ENCODE measurements at regions of chr11 and their contacts with region 1.

Region 1: GRCh38 chr11:39363596-39363995 is 2095.9 kb downstream of the LRRC4C start:
- DNase-seq: no peak
- H3K4me3 ChIP-seq: no peak overlapping the region
- H3K4me3 Mint-ChIP-seq: no peak overlapping the region
- H3K27ac ChIP-seq: no peak overlapping the region
- H3K27ac Mint-ChIP-seq: no peak overlapping the region
- H3K4me1 ChIP-seq: peaks cover 21% of the 10 kb centered on the region
- H3K4me1 Mint-ChIP-seq: peaks cover 25 to 36% (median 33%) of the 10 kb centered on the region in 4 donors
- H3K27me3 ChIP-seq: no peaks in the 10 kb centered on the region
- H3K27me3 Mint-ChIP-seq: no peaks in the 10 kb centered on the region

Region 2: DNA sequence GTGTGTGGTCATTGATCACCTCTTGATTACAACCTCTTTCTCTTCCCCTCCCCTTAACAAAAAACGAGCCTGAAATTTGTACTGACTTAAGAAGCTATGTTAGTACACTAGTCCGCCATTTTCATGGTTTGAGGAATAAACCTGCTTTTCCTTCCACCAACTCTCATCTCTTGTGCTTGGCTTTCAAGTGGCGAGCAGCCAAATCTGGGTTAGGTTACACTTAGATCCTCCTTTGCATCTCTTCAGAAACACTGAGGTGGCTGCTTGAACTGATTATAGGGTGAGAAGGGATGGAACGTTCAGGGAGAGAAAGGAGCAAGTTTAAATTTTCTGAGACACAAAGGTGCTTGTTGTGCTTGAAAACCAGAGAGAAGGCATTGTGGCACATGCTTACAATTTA is 75.6 kb before region 1 on chr11:
- CTCF ChIA-PET with region 1: no interaction called
- POLR2A ChIA-PET with region 1: no interaction called
- intact Hi-C with region 1: no loop called
- DNase-seq: no peak
- H3K4me3 ChIP-seq: no peak overlapping the region
- H3K4me3 Mint-ChIP-seq: no peak overlapping the region
- H3K27ac ChIP-seq: no peak overlapping the region
- H3K27ac Mint-ChIP-seq: no peak overlapping the region
- H3K4me1 ChIP-seq: no peaks in the 10 kb centered on the region
- H3K4me1 Mint-ChIP-seq: no peaks in the 10 kb centered on the region
- H3K27me3 ChIP-seq: no peaks in the 10 kb centered on the region
- H3K27me3 Mint-ChIP-seq: no peaks in the 10 kb centered on the region

Region 3: DNA sequence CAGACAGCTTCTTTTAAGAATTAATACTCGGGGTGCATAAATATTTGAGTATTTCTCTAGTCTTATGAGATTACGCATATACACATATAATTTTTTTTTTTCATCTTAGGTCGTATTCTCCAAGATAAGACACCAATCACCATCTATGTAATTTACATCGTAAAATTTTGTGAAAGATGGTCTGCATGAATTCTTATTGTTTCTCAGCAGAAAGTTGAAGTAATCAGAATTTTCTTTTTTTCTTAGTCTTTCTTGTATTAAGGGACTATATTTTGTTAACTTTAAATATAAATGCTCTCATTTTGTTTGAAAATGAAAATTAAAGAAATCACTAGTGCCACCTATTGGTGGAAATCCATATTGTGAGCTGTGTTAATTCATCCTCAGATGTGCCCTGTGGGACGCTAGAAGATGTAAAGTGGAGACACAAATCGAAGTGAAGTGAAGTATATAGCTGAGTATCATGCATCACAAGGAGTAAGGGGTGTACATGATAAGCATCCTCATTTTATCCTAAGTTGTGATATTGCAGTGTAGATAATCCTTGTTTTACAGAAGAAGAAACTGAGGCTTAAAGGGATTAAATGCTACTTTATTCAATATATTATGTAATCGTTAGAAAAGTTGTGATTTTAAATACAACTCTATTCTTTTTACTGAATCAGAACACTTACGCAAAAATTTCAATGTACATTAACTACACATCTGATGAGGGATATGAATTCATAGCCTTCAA is 11.5 kb after region 1 on chr11:
- CTCF ChIA-PET with region 1: interaction called, 10 read pairs
- POLR2A ChIA-PET with region 1: no interaction called
- intact Hi-C with region 1: no loop called
- DNase-seq: peak in 4 of 5 donors; percentile 38 to 47 (median 42)
- H3K4me3 ChIP-seq: no peak overlapping the region
- H3K4me3 Mint-ChIP-seq: no peak overlapping the region
- H3K27ac ChIP-seq: no peak overlapping the region
- H3K27ac Mint-ChIP-seq: peak overlapping the region in 1 of 7 donors; percentile 1
- H3K4me1 ChIP-seq: peaks cover 6% of the 10 kb centered on the region
- H3K4me1 Mint-ChIP-seq: peaks cover 17 to 32% (median 21%) of the 10 kb centered on the region in 4 donors
- H3K27me3 ChIP-seq: no peaks in the 10 kb centered on the region
- H3K27me3 Mint-ChIP-seq: no peaks in the 10 kb centered on the region

Measured in CD4-positive, alpha-beta memory T cell (primary cell).